Activated T-helper 1 cell treated with anti-CD3 and anti-CD28 coated beads, Interleukin-12 subunit alpha, Interleukin-12 subunit beta, Interleukin-2, Interleukin-4 antibody, amounts not matched to agents 30 ng/mL and 10 ng/mL and 1 ng/mL, durations not matched to agents 14 hours and 24 hours and 36 hours (primary cell): ENCODE measurements at regions of chr5 and their contacts with region 1.

Region 1: GRCh38 chr5:14436801-14437542 is 144.6 kb upstream of the OTULINL start:
- DNase-seq: no peak
- H3K4me3 Mint-ChIP-seq: no peak overlapping the region
- H3K27ac Mint-ChIP-seq: peak overlapping the region; percentile 49
- H3K4me1 Mint-ChIP-seq: peaks cover 22% of the 10 kb centered on the region
- H3K27me3 Mint-ChIP-seq: peaks cover 6% of the 10 kb centered on the region

Region 2: DNA sequence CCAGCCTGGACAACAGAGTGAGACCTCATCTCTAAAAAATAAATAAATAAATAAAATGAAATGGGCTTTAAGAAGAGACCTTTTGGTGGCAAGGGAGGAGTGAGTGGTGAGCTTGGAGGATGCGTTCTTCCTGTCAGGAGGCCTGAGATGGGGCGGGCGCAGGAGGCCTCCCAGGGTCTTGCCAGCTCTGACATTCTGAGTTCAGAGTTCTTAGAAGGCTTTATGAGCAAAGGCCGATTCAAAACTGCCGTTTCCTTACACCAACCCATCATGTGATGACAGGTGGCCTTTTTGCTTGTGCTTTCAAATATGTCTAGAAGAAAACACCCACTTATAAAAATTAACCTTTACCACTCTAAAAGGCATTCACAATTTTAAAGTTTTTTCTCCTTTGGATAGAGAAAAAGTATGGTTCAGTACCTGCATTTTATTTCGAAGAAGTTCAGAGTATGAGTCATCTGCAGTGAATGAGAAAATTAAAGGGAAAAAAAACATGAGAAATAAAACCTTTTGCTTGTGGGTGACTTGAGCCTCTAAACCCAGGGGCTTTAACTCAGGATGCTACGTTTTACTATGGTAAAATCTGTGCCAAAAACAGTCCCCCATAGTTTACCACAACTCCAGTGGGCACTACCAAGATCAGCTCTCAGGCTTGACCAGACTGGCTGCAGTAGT is 12.8 kb before region 1 on chr5:
- intact Hi-C with region 1: loop called (anchors 1 kb)
- DNase-seq: no peak
- H3K4me3 Mint-ChIP-seq: no peak overlapping the region
- H3K27ac Mint-ChIP-seq: peak overlapping the region; percentile 66
- H3K4me1 Mint-ChIP-seq: peaks cover 23% of the 10 kb centered on the region
- H3K27me3 Mint-ChIP-seq: no peaks in the 10 kb centered on the region

Region 3: DNA sequence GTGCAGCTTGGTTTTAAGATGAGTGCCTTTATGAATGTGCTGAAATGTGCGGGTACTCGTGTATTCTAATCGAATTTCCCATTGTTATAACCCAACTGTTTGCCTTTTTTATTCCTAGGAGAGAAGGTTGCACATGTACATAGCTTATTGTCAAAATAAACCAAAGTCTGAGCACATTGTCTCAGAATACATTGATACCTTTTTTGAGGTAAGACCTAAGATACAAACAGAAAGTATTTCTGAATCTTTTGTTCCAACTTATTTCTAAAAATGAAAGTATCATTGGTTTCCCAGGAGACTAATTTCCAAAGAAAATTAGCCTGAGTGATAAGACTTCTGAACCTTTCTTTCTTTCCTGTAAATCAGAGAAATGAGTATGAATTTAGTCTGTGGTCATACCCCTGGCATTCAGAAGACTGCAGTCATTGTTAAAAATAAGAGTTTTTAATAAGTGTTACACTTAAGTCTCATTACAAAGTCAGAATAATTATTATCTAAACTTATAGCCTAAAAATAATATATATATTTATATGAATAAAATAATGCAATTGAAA is 42.2 kb after region 1 on chr5:
- intact Hi-C with region 1: loop called (anchors 2 kb)
- DNase-seq: no peak
- H3K4me3 Mint-ChIP-seq: no peak overlapping the region
- H3K27ac Mint-ChIP-seq: peak overlapping the region; percentile 52
- H3K4me1 Mint-ChIP-seq: peaks cover 6% of the 10 kb centered on the region
- H3K27me3 Mint-ChIP-seq: peaks cover 2% of the 10 kb centered on the region